Posterior cingulate gyrus (tissue), 11 donors: ENCODE measurements at regions of chr14 and their contacts with region 1.

Region 1: GRCh38 chr14:99415496-99416281 is 65.0 kb downstream of the SETD3 start:
- DNase-seq: peak in 4 of 10 donors; percentile 36 to 59 (median 50)

Region 2: DNA sequence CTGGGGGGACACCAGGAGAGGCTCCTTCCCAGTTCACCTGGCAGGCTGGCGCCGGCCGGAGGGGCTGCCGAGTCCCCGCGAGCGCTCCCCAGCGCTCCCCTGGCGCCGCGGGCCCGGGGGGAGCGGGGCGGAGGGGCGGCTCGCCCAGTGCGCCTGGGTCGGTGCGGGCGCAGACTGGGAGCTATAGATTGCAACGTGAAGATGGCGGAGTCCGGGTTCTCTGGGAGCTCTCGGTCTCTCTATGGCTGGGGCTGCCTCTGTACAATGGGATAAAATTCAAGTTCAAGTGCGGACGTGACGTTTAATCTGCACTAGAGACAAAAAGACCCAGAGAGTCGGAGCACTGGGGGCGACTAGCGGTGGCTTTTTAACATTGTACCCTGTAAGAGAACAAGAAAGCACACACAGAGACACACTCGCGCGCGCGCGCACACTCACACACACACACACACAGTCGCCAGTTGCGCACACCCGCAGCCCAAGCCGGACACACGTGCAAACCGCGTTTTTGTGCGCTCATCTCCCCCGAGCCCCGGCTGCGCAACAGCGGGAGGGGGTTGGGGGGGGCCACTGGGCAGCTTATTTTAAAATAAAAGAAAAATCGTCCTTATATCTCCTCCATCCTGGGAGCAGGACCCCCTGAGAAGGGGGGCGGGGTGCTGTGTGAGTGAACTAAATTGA is 143.6 kb before region 1 on chr14 and contains the start of gene BCL11B:
- intact Hi-C with region 1: loop called (anchors 10 kb)
- DNase-seq: peak in 9 of 10 donors; percentile 35 to 95 (median 65)

Region 3: GRCh38 chr14:99320105-99320572 is 95.5 kb before region 1 on chr14:
- intact Hi-C with region 1: loop called (anchors 2 kb)
- DNase-seq: peak in 2 of 10 donors; percentile 52 to 53